ENCODE measurements at regions of chr19 and their contacts with region 1.

Region 1: GRCh38 chr19:1837625-1838105 is 10.6 kb downstream of the REXO1 start:
- DNase-seq: peak; percentile 41
- H3K4me3 Mint-ChIP-seq: no peak overlapping the region
- H3K27ac Mint-ChIP-seq: no peak overlapping the region
- H3K4me1 Mint-ChIP-seq: no peaks in the 10 kb centered on the region
- H3K27me3 Mint-ChIP-seq: no peaks in the 10 kb centered on the region
- CTCF ChIP-seq: peak; percentile 93

Region 2: GRCh38 chr19:1819341-1820275 is 18.1 kb before region 1 on chr19:
- CTCF ChIA-PET with region 1: interaction called, 57 read pairs
- POLR2A ChIA-PET with region 1: no interaction called
- intact Hi-C with region 1: no loop called
- DNase-seq: no peak
- H3K4me3 Mint-ChIP-seq: no peak overlapping the region
- H3K27ac Mint-ChIP-seq: no peak overlapping the region
- H3K4me1 Mint-ChIP-seq: no peaks in the 10 kb centered on the region
- H3K27me3 Mint-ChIP-seq: no peaks in the 10 kb centered on the region
- CTCF ChIP-seq: no peak

Region 3: GRCh38 chr19:1847684-1848398 is 10.2 kb after region 1 on chr19:
- CTCF ChIA-PET with region 1: interaction called, 12 read pairs
- POLR2A ChIA-PET with region 1: no interaction called
- intact Hi-C with region 1: no loop called
- DNase-seq: peak; percentile 34
- H3K4me3 Mint-ChIP-seq: peak overlapping the region; percentile 84
- H3K27ac Mint-ChIP-seq: peak overlapping the region; percentile 95
- H3K4me1 Mint-ChIP-seq: peaks cover 26% of the 10 kb centered on the region
- H3K27me3 Mint-ChIP-seq: no peaks in the 10 kb centered on the region
- CTCF ChIP-seq: no peak